ENCODE measurements at regions of chr16 and their contacts with region 1.

Region 1: GRCh38 chr16:3065069-3065741 is at the start of gene IL32:
- DNase-seq: peak; percentile 80
- H3K4me3 Mint-ChIP-seq: peak within 1 kb of the TSS; percentile 100
- H3K27ac Mint-ChIP-seq: peak within 1 kb of the TSS; percentile 99
- H3K4me1 Mint-ChIP-seq: peaks cover 68% of the 10 kb centered on the region
- H3K27me3 Mint-ChIP-seq: no peaks in the 10 kb centered on the region
- total RNA-seq, gene IL32: 4,131 to 4,213 TPM

Region 2: GRCh38 chr16:2968738-2969544 is 96.3 kb before region 1 on chr16 and contains the start of gene PAQR4:
- CTCF ChIA-PET with region 1: no interaction called
- POLR2A ChIA-PET with region 1: no interaction called
- DNase-seq: peak; percentile 88
- H3K4me3 Mint-ChIP-seq: peak within 1 kb of the TSS; percentile 76
- H3K27ac Mint-ChIP-seq: peak within 1 kb of the TSS; percentile 71
- H3K4me1 Mint-ChIP-seq: peaks cover 42% of the 10 kb centered on the region
- H3K27me3 Mint-ChIP-seq: peaks cover 23% of the 10 kb centered on the region
- total RNA-seq, gene PAQR4: 50.0 to 52.3 TPM

Region 3: DNA sequence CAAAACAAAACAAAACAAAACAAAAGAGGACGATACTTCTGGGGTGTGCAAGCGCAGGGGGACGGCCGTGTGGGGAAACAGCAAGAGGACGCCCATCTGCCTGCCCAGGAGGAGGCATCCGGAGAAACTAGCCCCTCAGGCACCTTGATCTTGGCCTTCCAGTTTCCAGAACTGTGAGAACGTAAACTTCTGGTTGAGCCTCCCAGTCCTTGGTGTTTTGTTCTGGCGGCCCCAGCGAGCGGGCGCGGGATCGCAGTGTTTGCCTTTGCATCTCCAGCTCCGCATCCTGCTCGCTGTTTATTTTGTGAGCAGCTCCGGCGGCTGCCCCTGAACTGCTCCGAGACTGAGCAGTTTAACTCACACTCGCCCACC is 19.9 kb before region 1 on chr16:
- CTCF ChIA-PET with region 1: interaction called, 27 read pairs
- POLR2A ChIA-PET with region 1: interaction called, 65 read pairs
- DNase-seq: peak; percentile 61
- H3K4me3 Mint-ChIP-seq: peak overlapping the region; percentile 85
- H3K27ac Mint-ChIP-seq: peak overlapping the region; percentile 78
- H3K4me1 Mint-ChIP-seq: peaks cover 51% of the 10 kb centered on the region
- H3K27me3 Mint-ChIP-seq: peaks cover 24% of the 10 kb centered on the region

Region 4: GRCh38 chr16:3106205-3106928 is 41.2 kb after region 1 on chr16:
- CTCF ChIA-PET with region 1: interaction called, 13 read pairs
- POLR2A ChIA-PET with region 1: interaction called, 10 read pairs
- DNase-seq: peak; percentile 92
- H3K4me3 Mint-ChIP-seq: peak overlapping the region; percentile 76
- H3K27ac Mint-ChIP-seq: peak overlapping the region; percentile 81
- H3K4me1 Mint-ChIP-seq: peaks cover 42% of the 10 kb centered on the region
- H3K27me3 Mint-ChIP-seq: peaks cover 5% of the 10 kb centered on the region

Region 5: GRCh38 chr16:3123986-3124886 is 59.0 kb after region 1 on chr16:
- CTCF ChIA-PET with region 1: interaction called, 177 read pairs
- POLR2A ChIA-PET with region 1: interaction called, 100 read pairs
- DNase-seq: peak; percentile 98
- H3K4me3 Mint-ChIP-seq: peak overlapping the region; percentile 88
- H3K27ac Mint-ChIP-seq: peak overlapping the region; percentile 98
- H3K4me1 Mint-ChIP-seq: peaks cover 48% of the 10 kb centered on the region
- H3K27me3 Mint-ChIP-seq: no peaks in the 10 kb centered on the region

Region 6: GRCh38 chr16:3141781-3142311 is 76.6 kb after region 1 on chr16:
- CTCF ChIA-PET with region 1: no interaction called
- POLR2A ChIA-PET with region 1: no interaction called
- DNase-seq: no peak
- H3K4me3 Mint-ChIP-seq: no peak overlapping the region
- H3K27ac Mint-ChIP-seq: no peak overlapping the region
- H3K4me1 Mint-ChIP-seq: peaks cover 2% of the 10 kb centered on the region
- H3K27me3 Mint-ChIP-seq: no peaks in the 10 kb centered on the region

Measured in activated CD4-positive, alpha-beta memory T cell treated with anti-CD3 and anti-CD28 coated beads, Interleukin-2, amount 10 ng/mL, durations not matched to agents 7 days and 5 days (primary cell).